Aorta (tissue), 5 donors: ENCODE measurements at regions of chr19 and their contacts with region 1.

Region 1: DNA sequence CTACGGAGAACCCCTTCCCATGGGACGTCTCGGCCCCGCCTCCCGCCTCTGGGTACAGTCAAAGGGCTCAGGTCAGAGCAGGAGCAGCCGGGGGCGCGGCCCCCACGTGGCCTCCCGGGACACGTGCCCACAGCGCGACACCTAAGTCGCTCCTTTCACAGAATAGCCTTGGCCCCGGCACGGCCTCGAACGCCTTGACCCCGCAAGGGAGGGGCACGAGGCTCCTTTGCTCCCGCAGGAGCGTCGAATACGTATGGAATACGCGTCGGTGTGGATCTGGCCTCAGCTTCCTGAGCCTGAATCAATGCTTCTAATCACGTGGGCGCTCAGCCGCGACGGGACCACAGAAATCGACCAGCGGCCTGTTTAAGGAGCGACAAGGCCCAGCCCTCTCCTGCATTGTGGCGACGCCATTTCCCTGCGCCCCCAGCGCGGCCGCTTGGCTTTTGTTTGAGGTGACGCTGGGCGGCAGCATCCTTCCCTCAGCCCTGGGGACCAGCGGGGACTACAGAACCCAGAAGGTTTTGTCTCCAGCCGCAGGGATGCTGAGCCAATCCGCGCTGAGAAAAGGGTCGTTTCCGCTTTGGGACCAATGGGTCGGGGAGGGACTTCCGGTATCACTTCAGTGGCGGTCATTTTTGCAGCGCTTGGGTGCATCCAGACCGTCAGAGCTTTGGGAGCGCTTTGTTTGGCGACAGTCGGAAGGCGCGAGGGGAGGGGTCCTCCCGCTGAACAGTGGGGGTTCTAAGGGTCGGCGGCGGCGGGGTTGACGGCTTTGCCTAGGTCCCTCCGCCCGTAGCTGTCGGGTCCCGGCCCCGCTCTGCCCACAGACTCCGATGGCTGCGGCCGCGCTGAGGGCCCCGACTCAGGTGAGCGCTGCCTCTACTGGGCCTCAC is at the start of gene ZIK1:
- DNase-seq: peak; percentile 94
- ATAC-seq: peak; percentile 95
- H3K4me3 ChIP-seq: peak within 1 kb of the TSS; percentile 32 to 68
- H3K27ac ChIP-seq: no peak within 1 kb of the TSS
- H3K4me1 ChIP-seq: no peaks in the 10 kb centered on the region
- H3K27me3 ChIP-seq: no peaks in the 10 kb centered on the region
- total RNA-seq, gene ZIK1: 3.5 to 6.3 TPM

Region 2: DNA sequence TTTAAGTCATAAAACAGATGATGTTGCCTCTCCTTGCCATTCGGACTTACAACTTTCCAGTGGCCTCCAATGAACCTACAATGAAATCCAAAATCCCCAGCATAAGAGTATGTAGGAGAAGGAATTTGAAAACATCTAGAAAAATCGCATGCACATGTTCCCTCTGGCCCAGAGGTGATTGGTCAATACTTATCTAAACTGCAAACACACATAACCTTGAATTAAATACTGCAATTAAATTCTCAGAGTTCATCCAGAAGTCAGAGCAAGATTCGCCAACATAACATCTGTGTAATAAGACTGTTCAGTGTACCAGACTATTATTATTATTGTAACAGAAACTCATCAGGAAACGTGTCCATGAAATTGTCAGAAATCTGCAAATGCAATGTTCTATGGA is 546.2 kb before region 1 on chr19:
- intact Hi-C with region 1: no loop called
- DNase-seq: no peak
- ATAC-seq: no peak
- H3K4me3 ChIP-seq: no peak overlapping the region
- H3K27ac ChIP-seq: no peak overlapping the region
- H3K4me1 ChIP-seq: no peaks in the 10 kb centered on the region
- H3K27me3 ChIP-seq: no peaks in the 10 kb centered on the region

Region 3: GRCh38 chr19:57233207-57233606 is 350.6 kb before region 1 on chr19:
- intact Hi-C with region 1: no loop called
- DNase-seq: no peak
- ATAC-seq: no peak
- H3K4me3 ChIP-seq: no peak overlapping the region
- H3K27ac ChIP-seq: no peak overlapping the region
- H3K4me1 ChIP-seq: no peaks in the 10 kb centered on the region
- H3K27me3 ChIP-seq: no peaks in the 10 kb centered on the region

Region 4: GRCh38 chr19:57389730-57390598 is 193.8 kb before region 1 on chr19 and contains the start of gene ZNF548:
- intact Hi-C with region 1: no loop called
- DNase-seq: peak; percentile 97 to 99
- ATAC-seq: peak; percentile 100
- H3K4me3 ChIP-seq: peak within 1 kb of the TSS; percentile 42 to 76
- H3K27ac ChIP-seq: peak within 1 kb of the TSS; percentile 61 to 78
- H3K4me1 ChIP-seq: peaks cover 0 to 2% of the 10 kb centered on the region in 2 donors
- H3K27me3 ChIP-seq: no peaks in the 10 kb centered on the region
- total RNA-seq, gene ZNF548: 23.4 to 29.0 TPM

Region 5: GRCh38 chr19:57435062-57435978 is 148.4 kb before region 1 on chr19 and contains the start of gene ZNF749:
- intact Hi-C with region 1: no loop called
- DNase-seq: peak; percentile 97 to 99
- ATAC-seq: peak; percentile 100
- H3K4me3 ChIP-seq: peak within 1 kb of the TSS; percentile 79 to 81
- H3K27ac ChIP-seq: no peak within 1 kb of the TSS
- H3K4me1 ChIP-seq: no peaks in the 10 kb centered on the region
- H3K27me3 ChIP-seq: no peaks in the 10 kb centered on the region
- total RNA-seq, gene ZNF749: 6.1 to 7.6 TPM

Region 6: DNA sequence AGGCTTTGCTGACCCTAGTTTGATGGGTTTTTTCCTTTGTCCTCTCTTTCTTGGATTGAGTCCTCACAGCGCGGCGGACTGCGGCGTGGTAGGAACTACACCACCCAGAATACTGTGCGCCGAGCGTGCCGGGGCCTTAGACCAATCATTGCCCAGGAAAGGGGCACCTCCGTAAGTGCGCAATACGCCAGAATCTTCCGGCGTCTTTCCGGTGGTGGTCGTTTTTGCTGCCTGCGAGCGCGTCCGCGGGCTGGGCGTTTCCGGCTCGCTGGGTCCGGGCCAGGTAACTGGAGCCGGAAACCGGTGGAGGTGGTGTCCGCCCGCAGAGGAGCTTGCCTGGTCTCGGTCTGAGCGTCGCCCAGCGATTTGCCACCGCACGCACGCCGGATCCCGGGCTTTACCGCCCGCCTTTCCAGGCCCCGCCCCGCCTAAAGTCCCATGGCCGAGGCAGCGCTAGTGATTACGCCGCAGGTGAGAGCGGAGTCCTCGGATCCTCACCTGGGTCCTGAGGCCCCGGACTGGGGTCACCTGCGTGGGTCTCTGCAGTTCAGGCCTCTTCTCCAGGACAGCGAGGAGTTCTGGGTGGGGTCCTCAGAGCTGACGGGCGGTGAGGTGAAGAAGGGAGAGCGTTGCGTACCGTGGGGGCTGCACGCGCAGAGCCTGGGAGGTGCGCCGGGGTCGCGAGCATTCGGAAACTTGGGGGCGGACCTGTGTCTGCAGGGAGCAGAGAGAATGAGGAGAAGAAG is 56.5 kb before region 1 on chr19 and contains the start of gene ZNF549:
- intact Hi-C with region 1: loop called in 1 of 2 experiments (anchors 2 kb)
- DNase-seq: peak; percentile 92 to 95
- ATAC-seq: peak; percentile 99
- H3K4me3 ChIP-seq: peak within 1 kb of the TSS; percentile 48 to 69
- H3K27ac ChIP-seq: peak within 1 kb of the TSS in 1 of 2 donors; percentile 25
- H3K4me1 ChIP-seq: no peaks in the 10 kb centered on the region
- H3K27me3 ChIP-seq: no peaks in the 10 kb centered on the region
- total RNA-seq, gene ZNF549: 6.2 to 7.6 TPM